Psoas muscle (tissue), 8 donors: ENCODE measurements at regions of chr1 and their contacts with region 1.

Region 1: GRCh38 chr1:28914228-28915030 is at the start of gene EPB41:
- DNase-seq: peak; percentile 92 to 93
- ATAC-seq: peak; percentile 97 to 98 (median 98)
- H3K4me3 ChIP-seq: peak within 1 kb of the TSS; percentile 74
- H3K27ac ChIP-seq: peak within 1 kb of the TSS; percentile 68
- H3K4me1 ChIP-seq: peaks cover 30% of the 10 kb centered on the region
- H3K27me3 ChIP-seq: no peaks in the 10 kb centered on the region
- CTCF ChIP-seq: no peak
- total RNA-seq, gene EPB41: 14.0 to 28.2 (median 22.5) TPM

Region 2: DNA sequence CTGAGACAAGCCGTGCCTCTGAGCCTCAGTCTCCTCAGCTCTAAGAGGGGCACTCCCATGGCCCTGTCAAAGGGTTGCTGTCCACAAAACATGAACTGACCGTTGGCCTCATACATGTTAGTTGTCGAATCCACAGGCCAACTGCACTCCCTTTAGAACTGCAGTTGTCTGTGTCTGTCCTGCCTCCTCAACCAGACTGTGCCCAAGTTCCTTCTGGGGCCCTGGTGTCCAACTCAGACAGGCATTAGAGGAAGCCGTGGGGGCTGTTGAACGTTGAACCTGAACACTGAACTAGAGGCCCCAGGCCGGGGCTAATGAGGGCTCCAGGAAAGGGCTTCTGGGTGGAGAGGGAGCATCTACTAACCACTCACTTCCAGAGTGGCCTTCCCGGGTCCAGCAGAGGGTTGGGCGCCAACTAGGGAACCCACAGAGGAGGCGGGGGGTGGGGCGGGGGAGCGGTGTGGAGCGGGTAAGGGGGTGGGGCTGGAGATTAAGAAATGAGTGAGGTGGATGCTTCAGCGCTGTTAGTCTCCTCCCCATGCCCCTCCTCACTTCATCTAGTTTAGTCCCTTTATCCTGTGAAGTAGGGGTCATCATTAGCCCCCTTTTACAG is 322.6 kb before region 1 on chr1 and contains the start of gene RAB42:
- intact Hi-C with region 1: no loop called
- DNase-seq: peak; percentile 56 to 61
- ATAC-seq: peak in 2 of 4 donors; percentile 48 to 51
- H3K4me3 ChIP-seq: peak within 1 kb of the TSS; percentile 67
- H3K27ac ChIP-seq: no peak within 1 kb of the TSS
- H3K4me1 ChIP-seq: peaks cover 3% of the 10 kb centered on the region
- H3K27me3 ChIP-seq: no peaks in the 10 kb centered on the region
- CTCF ChIP-seq: no peak
- total RNA-seq, gene RAB42: 0.32 to 1.3 (median 0.68) TPM

Region 3: DNA sequence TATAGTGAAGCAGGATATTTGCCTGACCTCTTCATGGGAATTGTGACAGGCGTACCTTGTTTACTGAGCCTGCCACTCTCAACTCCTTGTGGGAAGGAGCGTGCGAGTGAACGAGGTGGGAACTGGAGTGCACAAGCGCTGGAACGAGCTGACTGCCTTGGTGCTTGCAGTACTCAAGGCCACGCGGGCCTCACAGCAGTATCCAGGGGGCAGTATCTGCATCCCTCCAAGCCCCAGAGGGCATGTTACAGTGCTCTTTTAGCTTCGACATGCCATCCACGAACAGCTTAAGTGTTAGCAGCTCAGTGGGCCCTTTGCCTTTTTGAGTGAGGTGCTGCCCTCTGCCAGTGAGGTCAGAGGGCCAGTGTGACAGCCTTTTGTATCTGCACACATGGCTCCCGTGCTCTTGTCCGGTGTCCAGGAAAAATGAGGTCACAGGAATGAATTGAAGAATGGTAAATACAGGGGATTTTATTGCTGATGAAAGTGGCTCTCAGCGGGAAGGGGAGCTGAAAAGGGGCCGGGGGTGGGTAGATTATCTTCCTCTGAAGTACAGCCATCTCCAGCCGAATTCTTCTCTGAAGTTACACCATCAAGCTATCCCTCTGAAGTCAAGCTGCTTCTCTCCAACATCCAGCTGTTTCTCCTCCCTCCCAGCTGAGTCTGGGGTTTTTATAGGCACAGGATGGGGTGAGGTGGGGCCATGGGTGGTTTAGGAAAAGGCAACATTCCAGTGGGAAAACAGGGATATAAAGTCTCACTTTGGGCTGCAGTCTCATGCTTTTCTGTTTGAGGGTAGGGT is 69.3 kb after region 1 on chr1:
- intact Hi-C with region 1: loop called in 1 of 2 experiments (anchors 5 kb)
- DNase-seq: peak; percentile 31 to 55
- ATAC-seq: peak; percentile 59 to 86 (median 80)
- H3K4me3 ChIP-seq: no peak overlapping the region
- H3K27ac ChIP-seq: peak overlapping the region; percentile 52
- H3K4me1 ChIP-seq: peaks cover 34% of the 10 kb centered on the region
- H3K27me3 ChIP-seq: no peaks in the 10 kb centered on the region
- CTCF ChIP-seq: peak; percentile 21